Sciatic nerve (tissue), 2 donors: ENCODE measurements at regions of chr15 and their contacts with region 1.

Region 1: DNA sequence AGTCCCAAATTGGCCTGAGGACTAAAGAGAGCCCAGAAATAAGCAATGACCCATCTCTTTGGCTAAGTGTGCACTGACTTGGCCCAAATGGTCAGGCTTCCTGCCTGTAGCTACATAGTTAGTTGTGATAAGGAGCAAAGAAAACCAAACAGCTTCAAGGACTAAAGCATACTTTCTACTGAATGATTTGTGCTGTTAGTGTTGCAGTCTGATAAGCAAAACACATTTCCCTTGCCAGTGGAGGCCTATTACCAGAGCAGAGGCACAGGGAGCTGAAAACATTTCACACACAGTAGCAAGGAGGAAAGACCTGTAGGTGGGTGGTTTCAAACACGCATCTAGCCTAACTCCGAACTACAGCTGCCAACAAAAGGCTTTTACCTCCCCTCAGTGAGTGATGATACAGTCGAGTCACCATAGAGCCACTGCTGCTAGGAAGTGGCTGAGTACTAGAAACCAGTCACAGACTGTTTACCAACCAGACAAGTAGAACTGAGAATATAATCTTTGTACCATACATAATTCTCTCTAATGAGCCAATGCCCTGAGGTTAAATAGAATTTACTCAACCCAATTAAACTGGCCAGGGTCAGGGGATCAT is 222.3 kb upstream of the THBS1 start:
- DNase-seq: no peak
- ATAC-seq: peak; percentile 89

Region 2: GRCh38 chr15:39396979-39397615 is 38.6 kb after region 1 on chr15:
- intact Hi-C with region 1: loop called (anchors 1 kb)
- DNase-seq: no peak
- ATAC-seq: no peak

Region 3: GRCh38 chr15:39453500-39454073 is 95.0 kb after region 1 on chr15:
- intact Hi-C with region 1: no loop called
- DNase-seq: no peak
- ATAC-seq: peak; percentile 31

Region 4: GRCh38 chr15:39565851-39566250 is 207.3 kb after region 1 on chr15:
- intact Hi-C with region 1: loop called (anchors 10 kb)
- DNase-seq: no peak
- ATAC-seq: no peak